Transverse colon (tissue), 4 donors: ENCODE measurements at regions of chr20 and their contacts with region 1.

Region 1: GRCh38 chr20:48620519-48621254 is 207.1 kb downstream of the PREX1 start:
- DNase-seq: peak; percentile 92
- H3K4me3 ChIP-seq: peak overlapping the region in 2 of 4 donors; percentile 14 to 41
- H3K27ac ChIP-seq: peak overlapping the region; percentile 3 to 36 (median 24)
- H3K4me1 ChIP-seq: peaks cover 12 to 24% (median 22%) of the 10 kb centered on the region in 4 donors
- H3K27me3 ChIP-seq: no peaks in the 10 kb centered on the region
- CTCF ChIP-seq: peak; percentile 78 to 93 (median 90)
- EP300 ChIP-seq: no peak
- POLR2A ChIP-seq: no peak

Region 2: DNA sequence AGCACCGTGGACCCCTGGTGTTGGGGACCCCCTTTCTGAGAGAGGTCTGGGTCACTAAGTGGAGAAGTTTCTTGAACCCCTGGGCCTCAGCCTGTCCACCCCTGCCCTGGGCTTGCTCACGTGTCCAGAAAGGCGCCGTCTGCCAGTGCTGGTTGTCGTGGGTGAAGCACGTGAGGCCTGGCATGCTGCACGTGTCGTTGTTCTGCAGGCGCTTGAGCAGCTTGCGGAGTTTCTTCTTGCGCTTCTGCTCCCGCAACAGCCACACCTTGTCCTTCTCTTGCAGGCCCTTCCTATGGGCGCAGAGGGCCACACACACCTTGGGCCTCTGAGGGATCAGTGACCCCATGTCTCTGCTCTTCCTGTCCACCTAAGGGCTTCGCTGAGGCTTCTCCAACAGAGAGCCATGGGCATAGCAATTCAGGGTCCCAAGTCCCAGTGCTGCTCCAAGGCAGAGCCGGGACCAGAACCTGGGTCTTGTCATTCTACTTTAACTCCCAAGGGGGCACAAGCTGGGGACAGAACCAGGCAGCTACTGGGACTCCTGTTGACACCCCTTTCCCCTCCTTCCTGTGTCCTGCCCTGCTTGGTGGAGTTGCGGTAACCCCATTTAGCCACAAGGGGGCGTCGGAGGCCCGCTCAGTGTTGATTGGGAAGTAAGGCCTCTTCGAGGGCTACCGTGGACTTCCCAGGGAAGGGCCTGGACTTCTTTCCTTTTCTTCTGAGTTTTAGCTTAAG is 957.2 kb before region 1 on chr20:
- in situ Hi-C with region 1: loop called in 3 of 4 experiments (anchors 5 to 10 kb)
- intact Hi-C with region 1: no loop called
- DNase-seq: peak; percentile 82
- H3K4me3 ChIP-seq: no peak overlapping the region
- H3K27ac ChIP-seq: no peak overlapping the region
- H3K4me1 ChIP-seq: peaks cover 0 to 8% (median 4%) of the 10 kb centered on the region in 4 donors
- H3K27me3 ChIP-seq: no peaks in the 10 kb centered on the region
- CTCF ChIP-seq: peak; percentile 90 to 98 (median 97)
- EP300 ChIP-seq: no peak
- POLR2A ChIP-seq: no peak

Region 3: DNA sequence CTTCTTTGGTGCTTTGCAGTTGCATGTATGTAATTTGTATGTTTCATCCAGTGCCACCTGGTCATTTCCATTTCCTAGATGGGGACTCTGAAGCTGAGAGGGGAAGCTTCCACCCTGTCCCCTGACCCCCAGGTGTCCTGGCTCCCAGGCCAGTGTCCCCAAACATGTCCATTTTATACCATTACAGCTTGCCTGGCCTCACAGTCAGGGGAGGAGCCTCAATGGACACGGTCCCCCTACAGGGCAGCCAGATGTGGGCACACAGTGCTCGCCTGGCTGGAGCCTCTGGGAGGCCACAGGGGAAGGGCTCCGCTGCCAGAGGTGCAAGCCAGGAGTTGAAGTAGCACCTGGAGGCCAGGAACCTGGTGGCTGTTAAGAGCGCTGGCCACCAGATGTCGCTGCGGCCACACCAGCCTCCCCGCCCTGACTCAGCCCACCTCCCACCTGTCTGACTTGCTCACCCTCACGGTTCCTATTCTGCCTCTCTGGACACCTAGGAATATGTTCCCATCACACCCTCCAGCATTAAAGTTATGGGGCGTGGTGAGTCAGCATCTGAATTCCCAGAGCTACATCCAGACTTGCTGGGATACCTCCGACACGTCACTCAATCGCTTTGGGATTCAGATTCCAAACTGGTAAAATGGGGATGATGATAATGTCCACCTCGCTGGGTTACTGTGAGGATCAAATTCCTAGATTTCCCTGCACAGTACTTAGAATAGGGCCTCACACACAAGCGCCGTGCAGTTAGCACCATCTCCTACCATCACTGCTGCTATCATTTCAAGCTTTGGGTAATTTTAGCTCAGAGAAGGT is 942.8 kb before region 1 on chr20:
- in situ Hi-C with region 1: loop called in 1 of 4 experiments (anchors 10 kb)
- intact Hi-C with region 1: loop called (anchors 5 kb)
- DNase-seq: peak; percentile 42
- H3K4me3 ChIP-seq: no peak overlapping the region
- H3K27ac ChIP-seq: no peak overlapping the region
- H3K4me1 ChIP-seq: peaks cover 0 to 10% (median 3%) of the 10 kb centered on the region in 4 donors
- H3K27me3 ChIP-seq: no peaks in the 10 kb centered on the region
- CTCF ChIP-seq: peak; percentile 61 to 75 (median 70)
- EP300 ChIP-seq: no peak
- POLR2A ChIP-seq: no peak

Region 4: DNA sequence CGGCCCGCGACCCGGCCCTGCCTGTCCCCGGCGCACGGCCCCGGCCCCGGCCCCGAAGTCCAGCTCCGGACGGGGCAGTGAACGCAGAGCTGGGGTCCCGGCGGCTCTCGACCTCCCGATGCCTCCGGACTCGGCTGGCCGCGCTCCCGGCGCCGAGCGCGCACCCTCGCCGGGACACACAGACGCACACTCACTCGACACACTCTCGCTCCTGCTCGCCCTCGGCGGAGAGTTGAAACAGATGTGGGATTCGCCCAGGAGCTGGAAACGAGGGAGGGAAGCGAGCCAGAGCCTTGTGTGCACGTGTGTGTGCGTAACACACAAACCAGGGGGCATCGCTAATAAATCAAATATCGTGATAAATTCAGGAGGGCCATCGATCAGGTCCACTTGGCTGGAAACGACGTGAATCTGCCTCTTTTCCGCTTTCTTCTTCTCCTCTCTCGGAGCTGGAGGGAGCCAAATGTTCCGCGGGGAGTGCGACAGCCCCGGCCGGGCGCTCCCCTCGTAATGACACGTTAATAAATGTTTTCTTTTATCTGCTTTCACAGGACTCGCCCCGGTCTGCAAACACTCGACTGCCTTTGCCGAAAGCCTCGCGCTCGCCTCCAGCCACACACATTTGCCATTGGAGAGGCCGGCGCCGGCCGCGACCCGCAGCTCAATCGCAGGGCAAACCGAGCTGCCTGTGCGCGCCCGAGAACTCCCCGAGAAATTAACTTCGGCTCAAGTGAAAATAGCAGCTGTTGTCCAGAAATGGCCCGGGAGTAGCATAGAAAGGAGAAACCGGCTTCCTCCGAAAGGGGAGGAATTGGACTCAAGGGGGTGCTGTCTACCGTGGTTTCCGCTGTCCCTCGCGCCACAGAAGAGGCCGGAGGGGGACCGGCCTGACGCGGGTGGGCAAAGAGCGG is 834.6 kb before region 1 on chr20:
- in situ Hi-C with region 1: loop called (anchors 10 kb)
- intact Hi-C with region 1: loop called (anchors 2 kb)
- DNase-seq: peak; percentile 69
- H3K4me3 ChIP-seq: peak overlapping the region; percentile 28 to 75 (median 62)
- H3K27ac ChIP-seq: peak overlapping the region; percentile 86 to 90 (median 88)
- H3K4me1 ChIP-seq: peaks cover 6 to 35% (median 18%) of the 10 kb centered on the region in 4 donors
- H3K27me3 ChIP-seq: no peaks in the 10 kb centered on the region
- CTCF ChIP-seq: peak; percentile 53 to 78 (median 65)
- EP300 ChIP-seq: no peak
- POLR2A ChIP-seq: peak; percentile 63